ENCODE measurements at regions of chr1 and their contacts with region 1.

Region 1: DNA sequence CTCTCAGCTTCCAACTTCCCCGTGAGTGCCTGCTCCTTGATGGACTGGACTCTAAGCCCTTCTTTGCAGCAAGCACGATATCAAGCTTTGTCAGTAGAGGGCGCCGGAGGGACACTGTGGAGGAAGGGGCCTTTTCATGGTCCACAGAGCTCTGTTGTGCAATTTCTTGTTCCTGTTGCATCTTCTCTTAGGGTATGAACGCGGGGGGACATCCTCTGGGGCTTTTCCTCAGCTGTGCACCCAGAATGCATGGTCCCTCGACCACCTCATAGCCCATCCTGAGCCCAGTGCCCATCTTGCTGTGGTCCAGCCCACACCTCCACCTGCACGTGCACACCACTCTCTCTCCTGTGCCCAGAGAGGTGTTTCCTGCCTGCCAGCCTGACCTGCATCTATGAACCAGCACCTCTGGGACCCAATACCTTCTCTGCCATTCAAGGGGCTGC is 556.8 kb downstream of the PTPRU start:
- DNase-seq: peak; percentile 93
- H3K4me3 ChIP-seq: no peak overlapping the region
- H3K27ac ChIP-seq: peak overlapping the region; percentile 83
- H3K4me1 ChIP-seq: peaks cover 6% of the 10 kb centered on the region
- H3K27me3 ChIP-seq: no peaks in the 10 kb centered on the region
- CTCF ChIP-seq: peak; percentile 90

Region 2: DNA sequence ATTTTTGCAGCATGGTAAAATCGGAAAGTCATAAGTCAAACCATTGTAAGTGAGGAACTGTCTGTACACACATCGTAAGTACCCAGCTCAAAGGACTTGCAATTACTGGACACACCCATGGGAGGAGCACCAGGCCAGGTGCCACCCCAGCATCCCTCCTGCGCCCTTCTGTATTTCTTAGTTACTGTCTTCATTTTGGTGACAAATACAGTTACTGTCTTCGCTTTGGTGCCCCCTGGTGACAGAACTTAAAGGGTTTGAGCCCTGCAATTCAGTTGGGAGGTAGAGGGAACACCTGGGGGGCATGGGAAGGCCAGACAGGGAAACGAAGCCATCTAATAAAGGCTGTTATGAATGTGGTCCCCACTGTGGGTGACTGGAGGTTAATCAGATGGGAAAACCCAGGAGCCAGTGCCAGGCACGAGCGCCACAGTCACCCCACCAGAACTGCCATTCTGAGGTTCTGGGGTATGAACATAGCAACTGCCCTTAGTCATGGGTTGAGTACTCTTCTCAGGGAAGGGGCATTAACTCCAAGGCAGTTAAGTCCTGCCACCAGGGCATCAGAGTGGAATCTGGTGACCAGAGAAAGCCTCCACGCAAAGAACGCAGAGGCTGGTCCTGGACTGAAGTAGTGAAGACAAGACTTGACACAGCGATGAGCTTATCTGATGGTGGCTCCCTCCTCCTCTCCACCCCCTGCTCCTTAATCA is 56.1 kb after region 1 on chr1:
- CTCF ChIA-PET with region 1: interaction called, 5 read pairs
- POLR2A ChIA-PET with region 1: no interaction called
- intact Hi-C with region 1: loop called (anchors 1 kb)
- DNase-seq: peak; percentile 68
- H3K4me3 ChIP-seq: no peak overlapping the region
- H3K27ac ChIP-seq: no peak overlapping the region
- H3K4me1 ChIP-seq: no peaks in the 10 kb centered on the region
- H3K27me3 ChIP-seq: no peaks in the 10 kb centered on the region
- CTCF ChIP-seq: peak; percentile 80